ENCODE measurements at regions of chr19 and their contacts with region 1.

Region 1: DNA sequence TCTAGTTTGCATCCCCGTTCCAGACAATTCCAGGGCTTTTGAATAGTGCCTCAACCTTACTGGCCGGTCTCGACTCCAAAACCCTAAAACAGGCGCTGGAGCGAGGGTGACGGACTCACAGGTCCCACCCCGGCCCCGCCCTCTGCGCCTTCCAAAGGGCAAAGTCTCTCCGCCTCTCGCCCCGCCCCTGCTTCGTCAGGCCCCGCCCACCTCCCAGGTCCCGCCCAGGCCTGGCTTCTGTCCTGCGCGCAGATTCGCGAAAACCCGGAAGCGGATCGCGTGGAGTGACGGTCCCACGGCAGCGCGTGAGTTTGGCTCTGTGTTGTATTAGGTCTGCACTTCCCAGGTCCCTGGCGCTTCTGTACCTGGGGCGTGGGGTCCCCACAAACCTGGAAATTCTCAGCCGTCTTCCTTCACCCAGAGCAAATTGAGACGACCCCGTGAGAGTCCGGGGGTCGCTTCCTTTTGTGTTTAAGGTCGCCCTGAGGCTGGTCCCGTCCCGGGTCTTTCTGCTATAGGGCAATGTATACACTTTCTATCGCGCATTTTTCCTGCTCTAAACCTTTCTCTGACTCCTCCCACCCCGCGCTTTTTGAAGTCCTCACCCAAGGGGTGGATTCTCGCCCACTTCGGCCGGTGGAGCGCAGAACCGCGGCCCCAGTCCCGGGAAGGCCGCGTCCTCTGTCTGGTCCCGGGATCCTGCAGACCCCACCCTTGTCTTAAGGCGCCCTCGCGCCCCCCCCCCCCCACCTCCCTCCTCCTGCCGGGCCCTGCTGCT is at the start of gene ZNF813:
- DNase-seq: peak; percentile 94 to 98 (median 97)
- ATAC-seq: peak; percentile 98 to 99 (median 99)
- H3K4me3 ChIP-seq: peak within 1 kb of the TSS; percentile 51 to 96 (median 81)
- H3K27ac ChIP-seq: peak within 1 kb of the TSS in 11 of 12 donors; percentile 27 to 81 (median 71)
- H3K4me1 ChIP-seq: peaks cover 0 to 23% (median 10%) of the 10 kb centered on the region in 12 donors
- H3K27me3 ChIP-seq: peaks cover 0 to 20% (median 0%) of the 10 kb centered on the region in 9 donors
- CTCF ChIP-seq: no peak
- POLR2A ChIP-seq: peak in 1 of 2 donors; percentile 51
- total RNA-seq, gene ZNF813: 0.82 to 2.5 (median 1.2) TPM

Region 2: DNA sequence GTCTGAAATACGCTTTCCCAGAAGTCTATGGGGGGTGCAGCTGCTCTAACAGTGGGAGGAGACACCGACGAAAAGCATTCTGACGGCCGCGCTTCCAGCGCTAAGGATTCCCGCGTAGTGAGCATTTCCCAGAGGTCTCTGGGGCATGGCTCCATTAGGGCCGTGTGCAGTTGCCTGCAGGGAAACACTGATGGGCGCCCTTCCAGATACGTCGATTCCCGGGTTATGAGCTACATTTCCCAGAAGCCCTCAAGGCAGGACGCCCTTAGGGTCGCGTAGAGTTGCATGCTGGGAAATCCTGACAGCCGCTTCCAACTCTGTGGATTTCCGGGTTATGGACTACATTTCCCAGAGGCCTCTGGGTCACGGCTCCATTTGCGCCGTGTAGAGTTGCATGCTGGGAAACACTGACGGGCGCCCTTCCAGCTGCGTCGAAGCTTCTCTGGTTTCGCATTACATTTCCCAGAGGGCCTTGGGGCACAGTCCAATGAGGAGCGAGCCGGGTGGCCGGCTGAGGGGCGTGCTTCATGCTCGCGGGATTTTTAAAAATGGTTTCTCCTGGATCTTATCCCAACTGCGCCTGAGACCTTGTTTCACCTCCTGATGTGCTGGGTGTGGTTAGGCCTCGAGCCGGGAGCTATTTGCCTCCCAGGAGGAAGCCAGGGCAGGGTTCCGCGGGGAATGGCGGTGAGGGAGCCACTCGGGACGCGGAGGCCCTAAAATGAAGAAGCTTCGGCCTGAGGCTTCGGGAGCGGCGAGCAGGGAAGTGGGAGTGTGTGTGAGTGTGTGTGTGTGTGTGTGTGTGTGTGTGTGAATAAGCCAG is 53.1 kb after region 1 on chr19:
- intact Hi-C with region 1: loop called in 1 of 10 experiments (anchors 2 kb)
- DNase-seq: peak; percentile 97 to 99 (median 98)
- ATAC-seq: peak; percentile 98 to 99 (median 99)
- H3K4me3 ChIP-seq: peak overlapping the region; percentile 8 to 65 (median 58)
- H3K27ac ChIP-seq: peak overlapping the region; percentile 57 to 93 (median 86)
- H3K4me1 ChIP-seq: peaks cover 0 to 15% (median 10%) of the 10 kb centered on the region in 12 donors
- H3K27me3 ChIP-seq: no peaks in the 10 kb centered on the region
- CTCF ChIP-seq: no peak
- POLR2A ChIP-seq: peak in 1 of 2 donors; percentile 49

Region 3: DNA sequence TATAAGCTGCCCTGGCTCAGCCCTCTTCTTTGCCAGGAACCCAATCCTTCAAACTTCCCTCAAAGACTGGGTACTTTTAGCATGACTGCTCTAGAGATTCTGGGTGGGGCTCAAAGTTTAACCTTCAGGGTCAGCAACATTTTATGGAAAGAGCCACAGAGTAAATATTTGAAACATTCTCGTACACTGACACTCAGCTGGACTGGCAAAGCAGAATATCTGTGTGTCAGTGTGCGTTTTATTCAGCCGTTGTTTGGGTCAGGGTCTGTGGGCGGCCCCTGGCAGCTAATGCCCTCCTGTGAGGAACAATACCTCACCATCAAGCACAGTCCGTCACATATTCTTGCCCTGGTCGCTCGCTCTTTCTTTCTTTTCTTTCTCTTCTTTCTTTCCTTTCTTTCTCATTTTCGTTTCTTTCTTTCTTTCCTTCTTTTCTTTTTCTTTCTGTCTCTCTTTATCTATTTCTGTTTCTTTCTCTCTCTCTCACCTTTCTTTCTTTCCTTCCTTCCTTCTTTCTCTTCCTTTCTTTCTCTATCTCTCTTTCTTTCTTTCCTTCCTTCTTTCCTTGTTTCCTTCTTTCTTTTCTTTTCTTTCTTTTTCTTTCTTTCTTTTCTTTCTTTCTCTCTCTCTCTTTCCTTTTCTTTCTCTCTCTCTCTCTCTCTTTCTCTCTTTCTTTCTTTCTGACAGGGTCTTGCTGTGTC is 174.9 kb after region 1 on chr19:
- intact Hi-C with region 1: no loop called
- DNase-seq: no peak
- ATAC-seq: no peak
- H3K4me3 ChIP-seq: no peak overlapping the region
- H3K27ac ChIP-seq: no peak overlapping the region
- H3K4me1 ChIP-seq: peaks cover 0 to 5% (median 0%) of the 10 kb centered on the region in 12 donors
- H3K27me3 ChIP-seq: no peaks in the 10 kb centered on the region
- CTCF ChIP-seq: no peak
- POLR2A ChIP-seq: no peak

Measured in heart left ventricle (tissue), 16 donors.